ENCODE measurements at regions of chr7 and their contacts with region 1.

Region 1: GRCh38 chr7:100148559-100149350 is at the start of gene LAMTOR4:
- DNase-seq: peak; percentile 100
- H3K4me3 Mint-ChIP-seq: peak within 1 kb of the TSS; percentile 100
- H3K27ac Mint-ChIP-seq: peak within 1 kb of the TSS; percentile 99
- H3K4me1 Mint-ChIP-seq: peaks cover 29% of the 10 kb centered on the region
- H3K27me3 Mint-ChIP-seq: no peaks in the 10 kb centered on the region
- total RNA-seq, gene LAMTOR4: 129 to 135 TPM

Region 2: GRCh38 chr7:100119062-100119700 is 29.6 kb before region 1 on chr7 and contains the starts of genes CNPY4 and TAF6:
- CTCF ChIA-PET with region 1: interaction called, 4 read pairs
- intact Hi-C with region 1: loop called (anchors 1 kb)
- DNase-seq: peak; percentile 96
- H3K4me3 Mint-ChIP-seq: peak within 1 kb of the TSS; percentile 93
- H3K27ac Mint-ChIP-seq: peak within 1 kb of the TSS; percentile 95
- H3K4me1 Mint-ChIP-seq: peaks cover 17% of the 10 kb centered on the region
- H3K27me3 Mint-ChIP-seq: no peaks in the 10 kb centered on the region
- total RNA-seq, gene CNPY4: 7.2 to 8.7 TPM
- total RNA-seq, gene TAF6: 48.9 to 53.5 TPM

Region 3: GRCh38 chr7:100167921-100168323 is 19.2 kb after region 1 on chr7:
- CTCF ChIA-PET with region 1: interaction called, 5 read pairs
- intact Hi-C with region 1: loop called (anchors 1 kb)
- DNase-seq: peak; percentile 35
- H3K4me3 Mint-ChIP-seq: peak overlapping the region; percentile 78
- H3K27ac Mint-ChIP-seq: peak overlapping the region; percentile 85
- H3K4me1 Mint-ChIP-seq: peaks cover 72% of the 10 kb centered on the region
- H3K27me3 Mint-ChIP-seq: no peaks in the 10 kb centered on the region

Region 4: GRCh38 chr7:100190048-100190711 is 41.4 kb after region 1 on chr7:
- CTCF ChIA-PET with region 1: interaction called, 5 read pairs
- intact Hi-C with region 1: loop called (anchors 1 kb)
- DNase-seq: no peak
- H3K4me3 Mint-ChIP-seq: no peak overlapping the region
- H3K27ac Mint-ChIP-seq: peak overlapping the region; percentile 80
- H3K4me1 Mint-ChIP-seq: peaks cover 45% of the 10 kb centered on the region
- H3K27me3 Mint-ChIP-seq: no peaks in the 10 kb centered on the region

Measured in activated naive CD4-positive, alpha-beta T cell treated with anti-CD3 and anti-CD28 coated beads for 36 hours (primary cell).